ENCODE measurements at regions of chr12 and their contacts with region 1.

Region 1: GRCh38 chr12:111699-112493 is 45.3 kb downstream of the IQSEC3 start:
- DNase-seq: no peak
- H3K4me3 ChIP-seq: no peak overlapping the region
- H3K27ac ChIP-seq: no peak overlapping the region
- H3K4me1 ChIP-seq: no peaks in the 10 kb centered on the region
- H3K27me3 ChIP-seq: peaks cover 1% of the 10 kb centered on the region
- CTCF ChIP-seq: no peak

Region 2: GRCh38 chr12:159156-159782 is 47.4 kb after region 1 on chr12:
- CTCF ChIA-PET with region 1: no interaction called
- dilution Hi-C with region 1: loop called (anchors 5 kb)
- in situ Hi-C with region 1: no loop called
- intact Hi-C with region 1: no loop called
- DNase-seq: no peak
- H3K4me3 ChIP-seq: no peak overlapping the region
- H3K27ac ChIP-seq: no peak overlapping the region
- H3K4me1 ChIP-seq: no peaks in the 10 kb centered on the region
- H3K27me3 ChIP-seq: no peaks in the 10 kb centered on the region
- CTCF ChIP-seq: no peak

Region 3: DNA sequence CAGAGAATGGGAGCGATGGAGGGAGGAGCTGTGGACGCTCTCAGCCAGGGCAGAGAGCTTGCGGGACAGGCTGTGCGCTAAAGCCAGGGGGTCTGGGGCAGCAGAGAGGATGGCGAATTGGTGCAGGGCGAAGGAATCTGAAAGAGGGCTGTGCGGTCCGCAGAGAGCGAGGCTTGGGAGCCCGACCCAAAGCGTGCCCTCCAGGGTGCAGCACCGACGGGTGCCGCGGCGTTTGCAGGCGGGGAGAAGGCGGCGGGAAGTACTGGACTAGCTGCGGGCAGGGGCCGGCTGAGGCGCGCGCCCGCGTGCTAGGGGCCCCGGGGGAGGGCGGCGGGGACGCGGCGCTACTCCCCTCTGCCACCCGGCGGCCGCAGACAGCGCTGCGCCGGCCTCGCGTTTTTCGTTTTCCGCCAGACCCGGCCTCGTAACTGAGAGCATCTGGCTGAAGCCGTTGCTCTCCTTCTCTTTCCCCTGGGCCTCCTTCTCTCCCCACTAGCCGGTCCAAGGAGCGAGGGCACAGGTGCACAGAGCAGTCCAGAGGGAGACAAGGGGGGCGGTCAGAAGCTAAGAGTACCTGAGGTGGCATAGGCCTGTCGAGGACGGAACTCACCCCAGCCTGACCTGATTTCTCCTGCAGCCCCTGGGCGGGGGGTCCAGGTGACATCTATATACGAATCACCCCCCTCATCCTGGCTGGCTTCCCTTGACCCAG is 77.2 kb after region 1 on chr12:
- CTCF ChIA-PET with region 1: no interaction called
- dilution Hi-C with region 1: no loop called
- in situ Hi-C with region 1: no loop called
- intact Hi-C with region 1: no loop called
- DNase-seq: no peak
- H3K4me3 ChIP-seq: peak overlapping the region in 2 of 3 experiments; percentile 47 to 49
- H3K27ac ChIP-seq: no peak overlapping the region
- H3K4me1 ChIP-seq: no peaks in the 10 kb centered on the region
- H3K27me3 ChIP-seq: no peaks in the 10 kb centered on the region
- CTCF ChIP-seq: peak; percentile 35 to 65

Measured in mammary epithelial cell (primary cell).